OCI-LY7 (cell line): ENCODE measurements at regions of chr10 and their contacts with region 1.

Region 1: GRCh38 chr10:113678690-113679462 is 836 bp upstream of the CASP7 start:
- DNase-seq: peak; percentile 79
- H3K4me3 ChIP-seq: peak overlapping the region; percentile 95
- H3K27ac ChIP-seq: peak overlapping the region; percentile 44
- H3K4me1 ChIP-seq: peaks cover 20% of the 10 kb centered on the region
- CTCF ChIP-seq: peak; percentile 75

Region 2: DNA sequence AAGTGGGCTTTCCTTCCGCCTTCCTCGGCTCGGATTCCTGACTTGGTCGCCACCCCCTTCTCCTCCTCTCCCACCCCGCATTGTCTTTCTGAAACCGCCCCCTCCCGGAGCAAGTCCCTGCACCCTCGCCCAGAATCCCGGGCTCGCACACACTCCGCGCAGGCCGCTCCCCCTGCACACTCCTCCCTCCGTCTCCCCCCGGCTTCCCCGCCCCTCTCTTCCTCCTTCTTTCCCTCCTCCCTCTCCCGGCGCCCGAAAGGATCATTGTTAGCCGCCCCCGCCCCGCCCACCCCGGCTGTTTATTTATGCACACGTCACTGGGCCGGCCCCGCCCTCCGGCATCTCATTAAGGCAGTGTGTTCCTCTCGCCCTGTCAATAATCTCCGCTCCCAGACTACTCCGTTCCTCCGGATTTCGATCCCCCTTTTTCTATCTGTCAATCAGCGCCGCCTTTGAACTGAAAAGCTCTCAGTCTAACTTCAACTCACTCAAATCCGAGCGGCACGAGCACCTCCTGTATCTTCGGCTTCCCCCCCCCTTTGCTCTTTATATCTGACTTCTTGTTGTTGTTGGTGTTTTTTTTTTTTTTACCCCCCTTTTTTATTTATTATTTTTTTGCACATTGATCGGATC is 728.9 kb before region 1 on chr10 and contains the start of gene TCF7L2:
- CTCF ChIA-PET with region 1: no interaction called
- POLR2A ChIA-PET with region 1: no interaction called
- intact Hi-C with region 1: loop called (anchors 5 kb)
- DNase-seq: peak; percentile 86
- H3K4me3 ChIP-seq: peak within 1 kb of the TSS; percentile 75
- H3K27ac ChIP-seq: peak within 1 kb of the TSS; percentile 44
- H3K4me1 ChIP-seq: peaks cover 13% of the 10 kb centered on the region
- CTCF ChIP-seq: no peak
- total RNA-seq, gene TCF7L2: 1.3 and 2.8 TPM in 2 replicates

Region 3: DNA sequence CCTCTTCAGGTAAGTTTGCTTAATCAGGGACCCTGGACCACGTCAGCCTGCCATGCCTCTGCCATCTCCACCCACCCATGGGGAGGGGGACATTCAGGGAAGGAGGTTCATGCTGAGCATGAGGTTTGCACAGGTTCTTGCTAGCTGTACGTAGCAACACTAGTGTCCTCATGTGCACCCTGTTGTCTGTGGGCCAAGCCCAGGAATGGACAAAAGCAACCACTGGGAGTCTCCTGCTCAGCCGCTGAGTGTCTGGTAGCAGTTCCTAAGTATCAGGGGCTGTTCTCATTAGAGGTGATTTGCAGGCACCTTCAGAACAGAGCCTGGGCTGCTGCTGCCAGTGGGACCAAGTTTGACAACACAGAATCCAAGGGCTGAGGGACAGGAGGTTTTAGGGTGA is 18.7 kb after region 1 on chr10:
- CTCF ChIA-PET with region 1: no interaction called
- POLR2A ChIA-PET with region 1: interaction called, 11 read pairs
- intact Hi-C with region 1: no loop called
- DNase-seq: no peak
- H3K4me3 ChIP-seq: no peak overlapping the region
- H3K27ac ChIP-seq: no peak overlapping the region
- H3K4me1 ChIP-seq: no peaks in the 10 kb centered on the region
- CTCF ChIP-seq: no peak

Region 4: GRCh38 chr10:113775686-113776294 is 96.9 kb after region 1 on chr10:
- CTCF ChIA-PET with region 1: no interaction called
- POLR2A ChIA-PET with region 1: no interaction called
- intact Hi-C with region 1: no loop called
- DNase-seq: no peak
- H3K4me3 ChIP-seq: no peak overlapping the region
- H3K27ac ChIP-seq: no peak overlapping the region
- H3K4me1 ChIP-seq: no peaks in the 10 kb centered on the region
- CTCF ChIP-seq: no peak

Region 5: GRCh38 chr10:114173921-114174694 is 495.2 kb after region 1 on chr10 and contains the start of gene CCDC186:
- CTCF ChIA-PET with region 1: no interaction called
- POLR2A ChIA-PET with region 1: no interaction called
- intact Hi-C with region 1: loop called (anchors 5 kb)
- DNase-seq: peak; percentile 96
- H3K4me3 ChIP-seq: peak within 1 kb of the TSS; percentile 73
- H3K27ac ChIP-seq: no peak within 1 kb of the TSS
- H3K4me1 ChIP-seq: peaks cover 16% of the 10 kb centered on the region
- CTCF ChIP-seq: no peak
- total RNA-seq, gene CCDC186: 5.3 and 8.1 TPM in 2 replicates